Aorta (tissue), 5 donors: ENCODE measurements at regions of chr3 and their contacts with region 1.

Region 1: DNA sequence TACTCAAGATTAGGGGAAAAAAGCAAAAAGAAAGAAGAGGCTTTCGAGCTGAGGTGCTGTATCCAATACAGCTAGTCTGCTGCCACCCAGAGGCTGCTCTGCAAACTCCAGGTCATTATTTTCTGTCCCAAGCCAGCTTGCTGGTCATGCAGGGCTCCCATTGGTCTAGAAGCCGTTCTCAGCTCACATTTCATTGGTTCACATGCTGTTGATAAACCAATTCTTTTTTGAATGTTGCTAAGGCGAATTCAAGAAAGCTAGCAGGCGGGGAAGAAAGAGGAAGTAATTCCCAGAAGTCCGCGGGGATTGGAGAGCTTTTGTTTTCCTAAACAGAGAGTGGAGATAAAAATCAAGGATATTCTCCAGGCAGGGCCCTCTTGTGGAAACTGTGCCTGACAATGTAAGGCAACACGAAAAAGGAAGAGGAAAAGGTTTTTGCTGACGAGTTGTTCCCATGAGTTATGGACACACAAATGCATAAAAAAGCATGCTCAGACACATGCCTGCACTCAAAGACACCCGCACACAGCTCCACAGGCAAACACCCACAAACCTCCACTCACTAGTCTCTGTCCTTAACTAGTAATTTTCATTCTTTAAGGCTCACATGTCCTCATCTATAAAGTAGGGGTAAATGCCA is 33.4 kb downstream of the FSTL1 start:
- DNase-seq: peak; percentile 94 to 95
- ATAC-seq: peak; percentile 96
- H3K4me3 ChIP-seq: no peak overlapping the region
- H3K27ac ChIP-seq: peak overlapping the region in 1 of 2 donors; percentile 50
- H3K4me1 ChIP-seq: peaks cover 0 to 10% of the 10 kb centered on the region in 2 donors
- H3K27me3 ChIP-seq: no peaks in the 10 kb centered on the region

Region 2: DNA sequence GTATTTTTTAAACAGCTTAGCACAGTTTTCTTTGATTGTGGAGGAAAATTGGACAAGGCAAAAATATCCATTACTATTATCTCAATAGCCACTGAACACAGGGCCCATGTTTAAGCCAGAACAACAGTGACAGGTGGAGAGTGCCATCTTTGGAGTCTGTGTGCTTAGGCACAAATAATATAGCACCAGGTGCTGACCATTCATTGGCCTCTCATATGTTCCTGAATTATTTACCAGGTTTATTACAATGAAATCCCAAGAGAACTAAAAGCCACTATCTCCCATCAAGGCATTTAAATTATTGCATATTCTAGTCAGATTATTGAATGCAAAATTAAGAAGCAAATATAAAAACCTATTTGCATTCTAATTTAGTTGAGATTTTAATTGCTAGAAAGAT is 172.0 kb before region 1 on chr3:
- intact Hi-C with region 1: loop called (anchors 2 to 5 kb)
- DNase-seq: no peak
- ATAC-seq: no peak
- H3K4me3 ChIP-seq: no peak overlapping the region
- H3K27ac ChIP-seq: no peak overlapping the region
- H3K4me1 ChIP-seq: no peaks in the 10 kb centered on the region
- H3K27me3 ChIP-seq: no peaks in the 10 kb centered on the region

Region 3: GRCh38 chr3:120348981-120349818 is 68.2 kb before region 1 on chr3 and contains the start of gene LRRC58:
- intact Hi-C with region 1: loop called (anchors 5 to 10 kb)
- DNase-seq: peak; percentile 95 to 97
- ATAC-seq: peak; percentile 97
- H3K4me3 ChIP-seq: peak within 1 kb of the TSS; percentile 44 to 51
- H3K27ac ChIP-seq: peak within 1 kb of the TSS; percentile 64 to 68
- H3K4me1 ChIP-seq: no peaks in the 10 kb centered on the region
- H3K27me3 ChIP-seq: no peaks in the 10 kb centered on the region
- total RNA-seq, gene LRRC58: 18.0 to 19.2 TPM

Region 4: DNA sequence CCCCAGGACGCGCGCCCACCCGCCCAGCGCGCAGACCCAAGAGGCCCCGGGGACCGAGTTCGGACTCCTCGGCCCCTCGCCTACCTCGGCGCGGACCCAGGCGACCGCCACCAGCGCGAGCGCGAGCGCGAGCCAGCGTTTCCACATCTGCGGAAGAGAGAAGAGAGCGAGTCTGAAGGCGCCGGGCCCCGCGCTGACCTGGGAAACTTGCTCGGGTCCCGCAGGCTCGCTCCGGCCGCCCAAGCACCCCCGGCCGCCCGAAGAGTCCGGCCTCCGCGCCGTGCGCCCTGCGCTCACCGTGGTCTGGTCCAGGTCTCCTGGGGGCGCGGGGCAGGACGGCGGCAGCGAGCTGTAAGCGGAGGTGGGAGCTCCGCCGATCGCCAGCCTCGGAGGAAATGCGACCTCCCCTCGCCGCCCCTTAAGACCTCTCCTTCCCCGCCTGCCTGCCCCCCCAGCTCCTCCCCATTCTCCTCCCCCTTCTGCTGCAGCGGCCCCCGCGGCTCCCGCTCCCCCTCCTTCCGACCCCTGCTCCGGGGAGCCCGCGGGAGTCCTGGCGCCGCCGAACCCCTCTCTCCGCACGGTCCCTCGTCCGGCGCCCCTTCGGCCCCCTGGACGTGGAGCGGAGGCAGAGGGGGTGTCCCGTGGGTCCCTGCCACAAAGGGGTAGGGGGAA is 33.3 kb after region 1 on chr3 and contains the start of gene FSTL1:
- intact Hi-C with region 1: loop called (anchors 2 kb)
- DNase-seq: peak; percentile 79 to 91
- ATAC-seq: peak; percentile 86
- H3K4me3 ChIP-seq: peak within 1 kb of the TSS; percentile 90 to 98
- H3K27ac ChIP-seq: peak within 1 kb of the TSS; percentile 90 to 97
- H3K4me1 ChIP-seq: peaks cover 0 to 8% of the 10 kb centered on the region in 2 donors
- H3K27me3 ChIP-seq: no peaks in the 10 kb centered on the region
- total RNA-seq, gene FSTL1: 716 to 833 TPM

Region 5: GRCh38 chr3:120506828-120507774 is 89.7 kb after region 1 on chr3:
- intact Hi-C with region 1: loop called (anchors 1 to 5 kb)
- DNase-seq: no peak
- ATAC-seq: peak; percentile 62
- H3K4me3 ChIP-seq: no peak overlapping the region
- H3K27ac ChIP-seq: peak overlapping the region in 1 of 2 donors; percentile 30
- H3K4me1 ChIP-seq: peaks cover 4 to 6% of the 10 kb centered on the region in 2 donors
- H3K27me3 ChIP-seq: no peaks in the 10 kb centered on the region

Region 6: DNA sequence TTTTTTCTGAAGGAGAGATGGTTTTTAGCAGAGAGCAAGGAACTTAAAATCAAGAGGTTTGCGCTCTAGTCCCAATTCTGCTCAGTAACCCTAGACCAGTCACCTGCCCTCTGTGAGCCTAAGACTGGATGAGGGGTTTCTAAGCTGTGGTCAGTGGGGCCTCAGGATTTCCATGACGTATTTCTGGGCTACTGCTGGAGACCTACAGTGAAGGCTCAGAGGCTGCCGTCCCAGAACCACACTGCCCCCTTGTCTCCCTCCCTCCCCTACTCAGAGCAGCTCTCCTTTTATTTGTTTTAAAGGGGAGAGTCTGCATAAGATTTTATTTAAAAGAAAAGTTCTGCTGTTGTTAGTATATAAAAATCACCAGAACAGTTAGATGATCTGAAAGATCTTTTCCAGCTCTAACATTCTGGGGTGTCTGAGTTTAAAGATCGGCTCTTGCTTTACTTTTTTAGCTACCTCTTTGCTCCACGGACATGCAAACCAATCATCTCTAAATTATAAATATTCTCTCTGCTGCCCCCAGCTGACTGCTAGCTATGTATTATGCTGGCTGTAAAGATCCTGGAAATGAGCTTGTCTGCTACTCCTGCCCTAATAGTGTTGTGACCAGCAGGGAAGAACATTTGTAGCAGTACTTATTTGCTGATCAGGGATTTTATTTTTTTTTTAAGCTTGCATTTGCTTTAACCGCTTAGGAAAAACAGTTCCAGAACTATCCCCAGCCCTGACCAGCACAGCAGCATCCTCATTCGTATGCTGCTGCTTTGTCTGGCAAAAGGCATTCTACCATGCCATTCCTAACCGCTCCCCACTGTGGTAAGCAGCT is 150.2 kb after region 1 on chr3:
- intact Hi-C with region 1: no loop called
- DNase-seq: peak in 1 of 2 donors; percentile 17
- ATAC-seq: peak; percentile 76
- H3K4me3 ChIP-seq: peak overlapping the region in 1 of 2 donors; percentile 31
- H3K27ac ChIP-seq: peak overlapping the region; percentile 12 to 70
- H3K4me1 ChIP-seq: no peaks in the 10 kb centered on the region
- H3K27me3 ChIP-seq: no peaks in the 10 kb centered on the region